ENCODE measurements at regions of chr2 and their contacts with region 1.

Region 1: GRCh38 chr2:177263451-177264208 is 897 bp downstream of the NFE2L2 start:
- DNase-seq: peak; percentile 78
- H3K4me3 ChIP-seq: peak overlapping the region; percentile 88
- H3K27me3 ChIP-seq: no peaks in the 10 kb centered on the region
- CTCF ChIP-seq: peak; percentile 91

Region 2: GRCh38 chr2:177108890-177109289 is 154.7 kb before region 1 on chr2:
- CTCF ChIA-PET with region 1: no interaction called
- POLR2A ChIA-PET with region 1: no interaction called
- DNase-seq: no peak
- H3K4me3 ChIP-seq: no peak overlapping the region
- H3K27me3 ChIP-seq: peaks cover 2% of the 10 kb centered on the region; the same call in 1 of the 2 replicates
- CTCF ChIP-seq: no peak

Region 3: DNA sequence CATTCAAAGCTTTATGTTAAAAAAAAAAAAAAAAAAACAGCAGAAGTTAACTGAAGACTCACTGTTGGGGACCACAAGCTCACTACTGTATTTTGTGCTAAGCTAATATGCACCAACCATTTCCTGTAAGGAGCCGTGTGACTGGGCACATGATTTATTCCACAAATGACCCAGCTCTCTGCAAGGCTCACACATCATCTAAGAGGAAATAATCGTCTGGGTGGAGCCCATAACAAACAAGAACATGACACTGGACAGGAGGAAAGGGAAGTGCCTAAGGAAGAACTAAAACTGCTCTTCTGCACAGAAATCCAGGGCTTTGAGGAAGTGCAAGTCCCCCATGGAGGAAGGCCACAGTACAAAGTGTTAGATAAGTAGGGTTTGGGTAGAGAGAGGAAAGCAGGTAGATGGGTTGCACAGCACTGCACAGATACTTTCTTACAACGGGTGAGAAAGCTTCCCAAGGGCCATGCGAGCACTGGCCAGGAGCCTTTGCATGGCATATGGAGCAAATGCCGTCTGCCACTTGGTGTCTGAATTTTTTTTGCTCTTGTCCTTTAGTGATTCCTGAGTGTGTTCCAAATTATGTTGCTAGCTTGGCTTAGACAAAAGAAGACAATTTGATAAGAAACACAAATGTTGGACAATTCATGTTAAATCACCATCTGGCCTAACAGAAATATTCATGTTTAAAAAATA is 23.5 kb before region 1 on chr2:
- CTCF ChIA-PET with region 1: interaction called, 30 read pairs
- POLR2A ChIA-PET with region 1: interaction called, 9 read pairs
- DNase-seq: no peak
- H3K4me3 ChIP-seq: no peak overlapping the region
- H3K27me3 ChIP-seq: no peaks in the 10 kb centered on the region
- CTCF ChIP-seq: no peak

Region 4: DNA sequence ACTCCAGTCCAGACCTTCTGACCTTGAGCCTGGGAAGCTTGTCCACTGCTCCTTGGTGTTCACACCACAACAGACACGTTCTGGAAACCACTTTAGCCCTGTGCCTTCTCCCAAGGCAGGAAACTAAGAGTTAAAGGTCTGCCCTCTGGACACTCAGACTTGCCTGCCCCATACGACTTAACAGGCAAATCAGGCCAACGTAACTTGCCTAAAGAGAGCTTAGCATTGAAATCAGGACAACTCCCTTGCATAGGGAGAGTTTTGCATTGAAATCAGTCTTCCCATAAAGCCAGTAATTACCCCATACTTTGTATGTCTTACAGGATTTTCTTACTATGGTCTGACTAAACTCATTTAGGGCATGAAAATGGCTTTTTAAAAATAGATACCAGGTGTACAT is 17.6 kb before region 1 on chr2:
- CTCF ChIA-PET with region 1: interaction called, 30 read pairs
- POLR2A ChIA-PET with region 1: interaction called, 15 read pairs
- DNase-seq: no peak
- H3K4me3 ChIP-seq: no peak overlapping the region
- H3K27me3 ChIP-seq: no peaks in the 10 kb centered on the region
- CTCF ChIP-seq: no peak

Region 5: GRCh38 chr2:177281400-177282180 is 18.0 kb after region 1 on chr2:
- CTCF ChIA-PET with region 1: interaction called, 16 read pairs
- POLR2A ChIA-PET with region 1: no interaction called
- DNase-seq: no peak
- H3K4me3 ChIP-seq: no peak overlapping the region
- H3K27me3 ChIP-seq: no peaks in the 10 kb centered on the region
- CTCF ChIP-seq: no peak

Region 6: DNA sequence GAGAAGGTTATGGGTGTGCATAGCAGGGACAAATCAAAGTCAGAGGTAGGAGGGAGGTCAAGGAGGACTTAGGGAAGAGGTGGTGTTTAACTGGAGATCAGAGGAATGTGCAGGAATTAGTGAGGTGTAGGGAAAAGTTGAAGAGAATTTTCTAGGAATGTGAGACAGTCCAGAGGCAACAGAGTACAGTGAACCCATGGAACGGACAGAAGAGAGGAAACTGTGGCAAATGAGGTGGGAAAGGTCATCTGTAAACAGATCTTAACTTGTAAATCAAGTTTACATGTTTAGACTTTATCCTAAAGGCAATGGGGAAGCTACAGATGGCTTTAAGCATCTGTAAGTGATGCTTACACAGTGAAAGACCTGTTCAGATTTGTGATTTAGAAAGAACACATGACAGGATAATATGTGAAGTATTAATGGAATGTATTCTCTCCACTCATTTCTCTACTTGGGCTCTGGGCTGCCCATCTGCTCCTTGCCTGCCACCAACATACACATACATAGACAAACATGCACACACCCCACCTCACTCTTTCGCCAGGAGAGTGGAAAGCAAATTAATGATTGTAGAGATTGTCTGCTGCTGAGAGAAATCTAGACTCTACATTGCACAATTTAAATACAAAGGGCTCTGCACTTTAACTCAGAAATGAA is 61.8 kb after region 1 on chr2:
- CTCF ChIA-PET with region 1: interaction called, 12 read pairs
- POLR2A ChIA-PET with region 1: no interaction called
- DNase-seq: no peak
- H3K4me3 ChIP-seq: no peak overlapping the region
- H3K27me3 ChIP-seq: no peaks in the 10 kb centered on the region; the same call in 1 of the 2 replicates
- CTCF ChIP-seq: no peak

Measured in BJ (cell line).